Activated naive CD4-positive, alpha-beta T cell treated with anti-CD3 and anti-CD28 coated beads for 36 hours (primary cell): ENCODE measurements at regions of chr9 and their contacts with region 1.

Region 1: GRCh38 chr9:113657703-113658544 is 194.4 kb downstream of the RGS3 start:
- DNase-seq: peak; percentile 88
- H3K4me3 Mint-ChIP-seq: no peak overlapping the region
- H3K27ac Mint-ChIP-seq: no peak overlapping the region
- H3K4me1 Mint-ChIP-seq: no peaks in the 10 kb centered on the region
- H3K27me3 Mint-ChIP-seq: peaks cover 6% of the 10 kb centered on the region

Region 2: GRCh38 chr9:112921549-112921948 is 736.4 kb before region 1 on chr9:
- CTCF ChIA-PET with region 1: no interaction called
- intact Hi-C with region 1: loop called (anchors 5 kb)
- DNase-seq: peak; percentile 10
- H3K4me3 Mint-ChIP-seq: no peak overlapping the region
- H3K27ac Mint-ChIP-seq: no peak overlapping the region
- H3K4me1 Mint-ChIP-seq: no peaks in the 10 kb centered on the region
- H3K27me3 Mint-ChIP-seq: peaks cover 7% of the 10 kb centered on the region

Region 3: DNA sequence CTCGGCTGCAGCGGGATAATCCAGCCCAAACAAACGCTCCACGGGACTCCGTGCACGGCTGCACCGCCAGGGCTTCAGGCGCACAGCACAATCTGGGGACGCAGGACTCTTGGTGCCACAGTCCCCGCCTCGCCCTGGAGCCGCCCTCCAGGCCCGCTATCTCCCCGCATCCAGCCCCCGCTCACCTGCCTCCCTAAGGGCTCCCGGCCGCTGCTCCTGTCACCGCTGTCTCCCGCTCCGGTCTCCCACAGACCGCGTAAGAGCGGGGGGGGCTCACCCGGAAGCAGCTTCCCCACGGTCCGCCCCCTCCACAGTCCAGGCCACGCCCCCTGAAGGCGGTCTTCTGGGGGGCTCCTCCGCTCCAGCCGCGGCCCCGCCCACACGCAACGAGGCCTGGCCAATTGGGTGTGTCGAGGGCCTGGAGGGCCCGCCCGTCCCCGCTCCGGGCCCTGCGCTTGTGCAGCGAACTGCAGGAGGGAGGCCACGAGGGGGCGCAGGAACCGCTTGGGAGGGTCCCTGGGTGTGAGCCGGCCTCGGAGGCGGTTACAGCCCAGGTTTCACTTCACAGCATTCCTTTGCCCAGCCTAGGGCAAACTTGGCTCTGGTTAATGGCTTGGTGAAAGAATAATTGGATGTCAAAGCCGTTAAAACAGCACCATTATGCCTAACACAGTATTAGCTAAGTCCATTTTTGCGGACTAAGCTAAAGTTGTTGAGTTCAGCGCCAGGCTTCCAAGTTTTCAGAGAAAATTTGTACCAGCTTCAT is 256.7 kb before region 1 on chr9 and contains the start of gene ALAD:
- CTCF ChIA-PET with region 1: interaction called, 61 read pairs
- intact Hi-C with region 1: loop called (anchors 2 kb)
- DNase-seq: peak; percentile 99
- H3K4me3 Mint-ChIP-seq: peak within 1 kb of the TSS; percentile 93
- H3K27ac Mint-ChIP-seq: no peak within 1 kb of the TSS
- H3K4me1 Mint-ChIP-seq: peaks cover 20% of the 10 kb centered on the region
- H3K27me3 Mint-ChIP-seq: no peaks in the 10 kb centered on the region
- total RNA-seq, gene ALAD: 16.1 to 17.7 TPM

Region 4: GRCh38 chr9:113446323-113446740 is 211.6 kb before region 1 on chr9:
- CTCF ChIA-PET with region 1: interaction called, 175 read pairs
- intact Hi-C with region 1: loop called (anchors 1 kb)
- DNase-seq: peak; percentile 22
- H3K4me3 Mint-ChIP-seq: no peak overlapping the region
- H3K27ac Mint-ChIP-seq: no peak overlapping the region
- H3K4me1 Mint-ChIP-seq: no peaks in the 10 kb centered on the region
- H3K27me3 Mint-ChIP-seq: no peaks in the 10 kb centered on the region

Region 5: GRCh38 chr9:113511856-113512761 is 145.8 kb before region 1 on chr9:
- CTCF ChIA-PET with region 1: interaction called, 4 read pairs
- intact Hi-C with region 1: loop called (anchors 1 kb)
- DNase-seq: peak; percentile 82
- H3K4me3 Mint-ChIP-seq: peak overlapping the region; percentile 41
- H3K27ac Mint-ChIP-seq: peak overlapping the region; percentile 85
- H3K4me1 Mint-ChIP-seq: peaks cover 50% of the 10 kb centered on the region
- H3K27me3 Mint-ChIP-seq: peaks cover 2% of the 10 kb centered on the region

Region 6: DNA sequence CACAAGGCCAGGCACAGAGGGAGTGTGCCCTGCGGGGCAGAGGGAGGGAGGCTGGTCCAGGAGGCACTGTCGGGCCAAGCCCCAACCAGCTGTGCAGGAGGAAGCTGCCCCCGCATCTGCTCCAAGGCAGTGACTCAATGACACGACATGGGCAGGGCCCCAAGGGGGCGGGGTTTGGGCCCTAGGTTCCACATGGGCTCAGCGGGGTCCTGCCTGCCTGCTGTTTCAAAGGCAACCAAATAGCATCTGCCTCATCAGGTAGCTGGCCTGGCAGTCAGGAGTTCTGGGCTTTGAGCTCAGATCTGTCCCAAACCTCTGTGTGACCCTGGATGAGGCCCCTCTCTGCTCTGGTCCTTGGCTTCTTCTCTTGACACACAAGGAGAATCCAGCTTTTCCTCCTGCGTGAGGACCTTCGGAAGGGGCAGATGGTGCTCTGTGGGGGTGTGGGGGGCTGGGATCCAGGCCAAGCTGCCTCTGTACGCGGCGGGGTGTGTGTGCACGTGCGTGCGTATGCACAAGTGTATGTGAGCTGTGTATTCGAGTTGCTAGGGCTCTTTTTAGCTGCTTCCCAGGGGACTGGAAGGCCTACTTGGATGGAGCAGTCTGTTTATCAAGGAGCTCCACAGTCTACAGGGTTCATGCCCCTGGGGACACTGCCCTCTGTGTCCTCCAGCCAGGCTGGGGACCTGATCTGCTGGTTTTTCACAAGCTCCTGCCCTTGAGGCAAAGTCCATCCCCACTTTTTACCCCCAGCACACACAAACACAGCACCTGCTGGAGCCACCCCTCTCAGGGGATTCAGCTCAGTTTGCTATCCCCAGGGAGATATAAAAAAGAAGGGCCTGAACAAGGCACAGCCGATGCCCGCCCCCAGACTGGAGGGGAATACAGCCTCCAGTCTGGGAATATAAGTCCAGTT is 55.5 kb before region 1 on chr9:
- CTCF ChIA-PET with region 1: interaction called, 440 read pairs
- intact Hi-C with region 1: no loop called
- DNase-seq: peak; percentile 79
- H3K4me3 Mint-ChIP-seq: no peak overlapping the region
- H3K27ac Mint-ChIP-seq: no peak overlapping the region
- H3K4me1 Mint-ChIP-seq: peaks cover 4% of the 10 kb centered on the region
- H3K27me3 Mint-ChIP-seq: no peaks in the 10 kb centered on the region

Region 7: GRCh38 chr9:113622600-113623400 is 35.1 kb before region 1 on chr9:
- CTCF ChIA-PET with region 1: interaction called, 27 read pairs
- intact Hi-C with region 1: no loop called
- DNase-seq: peak; percentile 84
- H3K4me3 Mint-ChIP-seq: peak overlapping the region; percentile 14
- H3K27ac Mint-ChIP-seq: peak overlapping the region; percentile 86
- H3K4me1 Mint-ChIP-seq: peaks cover 34% of the 10 kb centered on the region
- H3K27me3 Mint-ChIP-seq: peaks cover 2% of the 10 kb centered on the region